ENCODE measurements at regions of chr5 and their contacts with region 1.

Region 1: DNA sequence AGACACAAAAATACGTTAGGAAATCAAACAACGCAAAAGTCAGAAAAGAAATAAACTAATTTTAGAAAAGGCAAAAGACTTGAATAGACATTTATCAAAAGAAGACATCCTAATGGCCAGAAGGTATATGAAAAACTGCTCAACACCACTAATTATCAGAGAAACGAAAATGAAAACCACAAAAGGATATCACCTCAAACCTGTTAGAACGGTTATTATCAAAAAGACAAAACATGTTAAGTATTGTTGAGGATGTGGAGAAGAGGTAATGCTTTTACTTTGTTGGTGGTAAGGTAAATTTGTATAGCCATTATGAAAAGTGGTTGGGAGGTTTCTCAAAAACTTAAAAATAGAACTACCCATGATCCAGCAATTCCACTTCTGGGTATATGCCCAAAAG is 230.0 kb upstream of the RGMB start:
- DNase-seq: no peak
- ATAC-seq: no peak
- H3K4me3 ChIP-seq: no peak overlapping the region
- H3K27ac ChIP-seq: no peak overlapping the region
- H3K4me1 ChIP-seq: no peaks in the 10 kb centered on the region
- H3K27me3 ChIP-seq: no peaks in the 10 kb centered on the region
- CTCF ChIP-seq: no peak

Region 2: GRCh38 chr5:98568336-98568735 is 24.8 kb after region 1 on chr5:
- CTCF ChIA-PET with region 1: no interaction called
- POLR2A ChIA-PET with region 1: interaction called, 12 read pairs
- in situ Hi-C with region 1: no loop called
- intact Hi-C with region 1: no loop called
- DNase-seq: no peak
- ATAC-seq: no peak
- H3K4me3 ChIP-seq: no peak overlapping the region
- H3K27ac ChIP-seq: no peak overlapping the region
- H3K4me1 ChIP-seq: no peaks in the 10 kb centered on the region
- H3K27me3 ChIP-seq: no peaks in the 10 kb centered on the region
- CTCF ChIP-seq: no peak

Measured in Panc1 (cell line).